ENCODE measurements at regions of chr1 and their contacts with region 1.

Region 1: GRCh38 chr1:153587314-153587713 is 21.7 kb upstream of the S100A2 start:
- DNase-seq: no peak
- H3K4me3 ChIP-seq: no peak overlapping the region
- H3K27ac ChIP-seq: no peak overlapping the region
- H3K4me1 ChIP-seq: peaks cover 17% of the 10 kb centered on the region
- H3K27me3 ChIP-seq: no peaks in the 10 kb centered on the region
- CTCF ChIP-seq: no peak

Region 2: GRCh38 chr1:153545067-153546055 is 42.0 kb before region 1 on chr1 and contains the start of gene S100A4:
- CTCF ChIA-PET with region 1: no interaction called
- POLR2A ChIA-PET with region 1: interaction called, 34 read pairs
- intact Hi-C with region 1: no loop called
- DNase-seq: peak; percentile 91 to 98
- H3K4me3 ChIP-seq: peak within 1 kb of the TSS; percentile 61
- H3K27ac ChIP-seq: peak within 1 kb of the TSS; percentile 67
- H3K4me1 ChIP-seq: peaks cover 91% of the 10 kb centered on the region
- H3K27me3 ChIP-seq: no peaks in the 10 kb centered on the region
- CTCF ChIP-seq: no peak
- total RNA-seq, gene S100A4: 303 and 346 TPM in 2 replicates

Region 3: DNA sequence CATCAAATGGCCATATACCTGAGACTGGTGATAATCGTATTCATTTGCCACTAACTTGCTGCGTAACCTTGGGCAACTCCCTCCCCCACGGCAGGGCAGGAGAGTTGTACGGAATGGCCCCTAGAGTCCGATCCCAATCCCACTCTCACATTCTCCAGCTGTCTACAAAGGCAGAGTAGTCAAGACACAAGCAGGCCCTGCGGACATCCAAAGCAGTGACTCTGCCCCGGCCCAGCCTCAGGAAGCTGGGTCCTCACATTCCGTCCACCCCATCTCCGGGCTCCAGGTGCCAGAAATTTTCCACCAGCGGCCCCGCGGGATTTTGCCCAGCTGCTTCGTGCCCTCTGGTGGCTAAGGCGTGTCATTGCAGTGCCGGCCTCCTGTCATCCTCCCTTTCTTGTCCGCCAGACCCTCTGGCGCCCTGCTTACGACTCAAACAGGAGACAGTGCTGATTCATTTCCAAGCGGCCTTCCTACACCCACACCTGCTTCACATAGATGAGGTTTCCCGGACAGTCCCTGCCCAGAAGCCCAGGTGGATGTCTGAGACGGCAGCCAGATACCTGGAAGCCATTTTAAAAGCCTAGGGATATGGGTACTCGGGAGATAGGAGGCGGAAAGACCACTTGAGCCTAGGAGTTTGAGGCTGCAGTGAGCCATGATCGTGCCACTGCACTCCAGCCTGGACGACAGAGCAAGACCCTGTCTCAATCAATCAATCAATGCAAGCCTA is 18.8 kb before region 1 on chr1:
- CTCF ChIA-PET with region 1: no interaction called
- POLR2A ChIA-PET with region 1: no interaction called
- intact Hi-C with region 1: no loop called
- DNase-seq: peak; percentile 85 to 94
- H3K4me3 ChIP-seq: peak overlapping the region; percentile 29; the same call in 1 of the 2 replicates
- H3K27ac ChIP-seq: peak overlapping the region; percentile 97
- H3K4me1 ChIP-seq: peaks cover 63% of the 10 kb centered on the region
- H3K27me3 ChIP-seq: no peaks in the 10 kb centered on the region
- CTCF ChIP-seq: peak; percentile 98

Region 4: GRCh38 chr1:153742411-153743142 is 155.3 kb after region 1 on chr1:
- CTCF ChIA-PET with region 1: no interaction called
- POLR2A ChIA-PET with region 1: interaction called, 14 read pairs
- intact Hi-C with region 1: no loop called
- DNase-seq: no peak
- H3K4me3 ChIP-seq: no peak overlapping the region
- H3K27ac ChIP-seq: no peak overlapping the region
- H3K4me1 ChIP-seq: no peaks in the 10 kb centered on the region
- H3K27me3 ChIP-seq: no peaks in the 10 kb centered on the region
- CTCF ChIP-seq: no peak

Region 5: GRCh38 chr1:153903841-153904455 is 316.6 kb after region 1 on chr1:
- CTCF ChIA-PET with region 1: interaction called, 15 read pairs
- POLR2A ChIA-PET with region 1: no interaction called
- intact Hi-C with region 1: no loop called
- DNase-seq: no peak
- H3K4me3 ChIP-seq: no peak overlapping the region
- H3K27ac ChIP-seq: no peak overlapping the region
- H3K4me1 ChIP-seq: no peaks in the 10 kb centered on the region; the same call in 1 of the 2 replicates
- H3K27me3 ChIP-seq: no peaks in the 10 kb centered on the region
- CTCF ChIP-seq: no peak

Measured in PC-9 (cell line).